Motor neuron (in vitro differentiated cells): ENCODE measurements at regions of chr11 and their contacts with region 1.

Region 1: DNA sequence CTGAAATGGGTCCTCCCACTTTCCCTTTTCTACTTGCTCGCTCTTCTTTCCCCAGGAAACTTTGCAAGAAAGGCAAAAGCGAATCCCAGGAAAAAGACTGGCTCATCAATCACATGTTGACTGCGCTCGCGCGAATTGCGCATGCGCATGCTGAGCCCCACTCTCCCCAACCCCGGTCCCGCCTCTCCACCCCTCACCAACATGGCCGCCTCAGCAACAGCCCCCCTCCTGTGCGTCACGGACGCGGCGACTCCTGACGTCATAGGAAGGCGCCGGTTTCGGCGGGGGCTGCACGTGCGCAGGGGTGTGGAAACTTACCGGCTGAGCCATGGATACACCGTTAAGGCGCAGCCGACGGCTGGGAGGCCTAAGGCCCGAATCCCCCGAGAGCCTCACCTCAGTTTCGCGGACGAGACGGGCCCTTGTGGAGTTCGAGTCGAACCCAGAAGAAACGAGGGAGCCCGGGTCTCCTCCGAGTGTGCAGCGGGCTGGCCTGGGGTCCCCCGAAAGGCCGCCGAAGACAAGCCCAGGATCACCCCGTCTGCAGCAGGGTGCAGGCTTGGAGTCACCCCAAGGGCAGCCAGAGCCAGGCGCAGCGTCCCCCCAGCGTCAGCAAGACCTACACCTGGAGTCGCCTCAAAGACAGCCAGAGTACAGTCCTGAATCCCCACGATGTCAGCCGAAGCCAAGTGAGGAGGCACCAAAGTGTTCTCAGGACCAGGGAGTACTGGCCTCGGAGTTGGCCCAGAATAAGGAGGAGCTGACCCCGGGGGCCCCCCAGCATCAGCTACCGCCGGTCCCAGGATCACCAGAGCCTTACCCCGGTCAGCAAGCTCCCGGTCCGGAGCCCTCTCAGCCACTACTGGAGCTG is at the start of gene CCDC86:
- ATAC-seq: peak; percentile 75 to 96 (median 92)
- H3K4me3 ChIP-seq: peak within 1 kb of the TSS; percentile 66 to 82 (median 80)
- H3K27ac ChIP-seq: peak within 1 kb of the TSS; percentile 31 to 45
- H3K4me1 ChIP-seq: peaks cover 27 to 29% of the 10 kb centered on the region in 2 donors
- total RNA-seq, gene CCDC86: 4.8 to 55.6 (median 15.0) TPM

Region 2: DNA sequence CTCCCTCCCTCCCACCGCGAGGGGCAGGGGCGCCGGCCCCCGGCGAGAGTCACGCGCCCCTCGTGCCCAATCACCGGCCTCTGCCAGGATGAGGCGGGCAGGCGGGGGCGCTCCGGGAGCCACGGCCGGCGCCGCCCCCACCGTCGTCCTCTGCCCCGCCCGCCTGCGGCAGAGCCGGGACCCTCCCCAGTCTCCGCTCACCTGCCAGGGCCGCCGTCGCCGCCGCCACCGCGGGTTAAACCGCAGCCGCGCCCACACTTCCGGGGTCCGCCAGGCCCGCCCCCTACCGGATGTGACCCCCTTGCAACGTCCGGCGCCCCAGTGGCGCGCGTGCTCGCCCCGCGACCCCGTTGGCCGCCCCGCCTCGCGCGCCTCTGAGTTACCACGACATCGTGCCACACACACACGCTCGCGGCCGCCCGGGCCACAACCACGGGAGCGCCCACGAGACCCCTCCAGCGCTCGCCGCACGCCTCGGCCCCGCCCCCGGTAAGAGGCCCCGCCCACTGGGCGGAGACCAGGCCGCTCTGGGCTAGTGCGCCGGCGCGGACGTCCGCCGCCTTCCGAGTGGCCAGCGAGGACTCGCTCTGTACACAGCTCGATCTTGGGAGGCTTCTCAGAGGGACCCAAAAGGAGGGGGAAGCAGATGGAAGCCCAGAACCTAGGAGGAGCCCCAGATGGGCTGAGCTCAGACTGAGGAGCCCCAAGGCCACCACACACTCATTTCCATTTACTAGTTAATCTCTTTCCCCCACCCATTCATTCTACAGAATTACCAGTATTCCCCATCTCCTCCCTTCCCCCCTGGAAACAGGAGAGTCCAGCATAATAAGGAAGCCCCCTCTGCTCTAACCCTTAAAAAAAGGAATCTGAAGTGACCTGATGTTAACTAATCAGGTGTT is 319.4 kb after region 1 on chr11 and contains the start of gene VPS37C:
- in situ Hi-C with region 1: loop called in 1 of 9 experiments (anchors 25 kb)
- ATAC-seq: peak; percentile 79 to 91 (median 88)
- H3K4me3 ChIP-seq: peak within 1 kb of the TSS; percentile 50 to 82 (median 69)
- H3K27ac ChIP-seq: peak within 1 kb of the TSS; percentile 87 to 92
- H3K4me1 ChIP-seq: peaks cover 7 to 13% of the 10 kb centered on the region in 2 donors
- total RNA-seq, gene VPS37C: 6.8 to 13.9 (median 11.0) TPM

Region 3: GRCh38 chr11:61187505-61188130 is 345.6 kb after region 1 on chr11:
- in situ Hi-C with region 1: loop called in 3 of 9 experiments (anchors 25 kb)
- ATAC-seq: peak; percentile 44 to 94 (median 65)
- H3K4me3 ChIP-seq: no peak overlapping the region
- H3K27ac ChIP-seq: no peak overlapping the region
- H3K4me1 ChIP-seq: peaks cover 0 to 2% of the 10 kb centered on the region in 2 donors